CD14-positive monocyte (primary cell): ENCODE measurements at regions of chr14 and their contacts with region 1.

Region 1: DNA sequence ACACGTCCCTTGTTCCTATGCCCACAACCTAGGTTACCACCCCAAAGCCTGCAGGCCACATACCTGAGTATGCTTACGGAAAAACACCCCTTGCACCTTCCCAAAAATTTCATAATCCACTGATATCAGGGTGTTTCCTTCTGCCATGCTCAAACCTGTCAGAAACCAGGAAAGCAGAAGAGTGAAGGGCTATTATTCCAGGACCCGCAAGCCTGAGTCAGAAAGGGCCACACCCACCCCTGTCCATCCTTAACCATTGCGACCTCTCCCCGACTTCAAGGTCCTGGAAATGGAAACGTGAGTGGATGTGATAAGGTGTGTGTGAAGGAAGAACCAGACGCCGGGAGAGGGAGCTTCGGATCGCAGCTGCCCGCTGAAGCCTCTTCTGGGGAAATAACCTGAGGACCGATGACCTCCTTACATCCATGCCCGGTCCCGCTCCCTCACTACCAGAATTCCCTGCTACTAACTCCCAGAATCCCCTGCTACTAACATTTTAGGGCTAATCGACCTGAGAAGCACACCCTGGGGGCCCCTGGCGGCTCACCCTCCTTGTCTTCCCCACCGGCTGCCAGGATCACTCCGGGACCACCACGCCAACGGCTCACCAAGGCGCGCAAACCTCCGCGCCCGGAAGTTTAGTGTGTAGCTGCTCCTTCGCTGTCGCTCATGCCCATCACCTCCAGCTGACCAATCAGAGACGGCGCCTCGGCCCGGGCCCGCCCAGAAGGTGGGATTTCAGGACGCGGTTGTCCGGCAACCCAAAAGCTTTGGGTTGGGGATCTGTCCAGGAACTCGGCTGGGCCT is at the start of gene ACYP1:
- DNase-seq: peak; percentile 81 to 86 (median 84)
- H3K4me3 ChIP-seq: peak within 1 kb of the TSS; percentile 75 to 84 (median 84)
- H3K4me3 Mint-ChIP-seq: peak within 1 kb of the TSS; percentile 99
- H3K27ac ChIP-seq: peak within 1 kb of the TSS; percentile 1 to 76
- H3K27ac Mint-ChIP-seq: peak within 1 kb of the TSS; percentile 83 to 96 (median 93)
- H3K4me1 ChIP-seq: peaks cover 14 to 32% of the 10 kb centered on the region in 2 donors
- H3K4me1 Mint-ChIP-seq: peaks cover 16% of the 10 kb centered on the region
- H3K27me3 ChIP-seq: no peaks in the 10 kb centered on the region
- H3K27me3 Mint-ChIP-seq: no peaks in the 10 kb centered on the region
- CTCF ChIP-seq: no peak
- polyA plus RNA-seq, gene ACYP1: 2.8 to 11.8 (median 4.3) TPM

Region 2: DNA sequence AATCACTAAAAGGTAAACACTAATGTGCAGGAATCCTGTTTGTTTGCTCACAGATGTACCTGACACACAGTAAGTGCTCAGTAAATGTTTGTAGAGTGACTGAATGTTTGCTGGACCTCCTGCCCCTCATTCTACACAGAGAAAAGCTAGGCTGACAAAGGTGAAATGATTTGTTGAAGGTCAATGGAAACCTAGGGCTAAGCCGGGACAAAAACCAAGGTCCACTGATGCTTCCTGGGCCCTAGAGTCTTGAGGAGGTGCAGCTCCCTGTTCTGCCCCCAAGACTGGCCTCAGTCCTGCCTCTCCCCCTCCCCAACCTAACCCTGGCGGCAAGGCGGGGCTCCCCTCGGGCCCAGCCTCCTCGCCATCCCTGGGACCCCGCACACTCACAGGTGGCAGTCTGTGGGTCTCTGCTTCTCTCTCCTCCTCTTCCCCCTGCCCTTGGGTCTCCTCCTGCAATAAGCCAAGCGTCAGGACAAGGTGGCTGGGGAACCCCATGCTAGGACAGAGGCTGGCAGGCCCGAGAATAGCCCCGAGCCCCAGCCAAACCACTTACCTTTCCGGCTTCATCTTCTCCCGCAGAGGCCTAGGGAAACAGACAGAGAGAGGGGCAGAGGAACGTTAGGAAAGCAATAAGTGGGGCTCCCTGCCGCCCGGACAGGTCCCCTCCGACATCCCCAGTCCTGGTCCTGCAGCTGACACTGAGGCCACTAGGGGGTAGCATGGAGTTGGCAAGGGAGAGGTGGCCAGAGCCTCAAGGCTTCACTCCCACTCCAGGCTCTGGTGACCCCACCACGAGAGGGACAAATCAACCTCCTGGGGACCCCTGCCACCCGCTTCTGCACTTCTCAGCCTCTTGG is 117.6 kb before region 1 on chr14:
- intact Hi-C with region 1: loop called in 1 of 2 experiments (anchors 10 kb)
- DNase-seq: peak; percentile 41 to 68 (median 59)
- H3K4me3 ChIP-seq: no peak overlapping the region
- H3K4me3 Mint-ChIP-seq: peak overlapping the region in 1 of 2 donors; percentile 83
- H3K27ac ChIP-seq: no peak overlapping the region
- H3K27ac Mint-ChIP-seq: peak overlapping the region in 3 of 7 donors; percentile 47 to 82 (median 73)
- H3K4me1 ChIP-seq: peaks cover 27 to 29% of the 10 kb centered on the region in 2 donors
- H3K4me1 Mint-ChIP-seq: peaks cover 32% of the 10 kb centered on the region
- H3K27me3 ChIP-seq: no peaks in the 10 kb centered on the region
- H3K27me3 Mint-ChIP-seq: peaks cover 3 to 11% (median 8%) of the 10 kb centered on the region in 3 donors
- CTCF ChIP-seq: peak; percentile 97